PC-9 (cell line): ENCODE measurements at regions of chr7 and their contacts with region 1.

Region 1: GRCh38 chr7:124996778-124997177 is 67.2 kb upstream of the POT1 start:
- DNase-seq: no peak
- H3K4me3 ChIP-seq: no peak overlapping the region
- H3K27ac ChIP-seq: no peak overlapping the region
- H3K4me1 ChIP-seq: peaks cover 24% of the 10 kb centered on the region
- H3K27me3 ChIP-seq: no peaks in the 10 kb centered on the region
- CTCF ChIP-seq: no peak

Region 2: DNA sequence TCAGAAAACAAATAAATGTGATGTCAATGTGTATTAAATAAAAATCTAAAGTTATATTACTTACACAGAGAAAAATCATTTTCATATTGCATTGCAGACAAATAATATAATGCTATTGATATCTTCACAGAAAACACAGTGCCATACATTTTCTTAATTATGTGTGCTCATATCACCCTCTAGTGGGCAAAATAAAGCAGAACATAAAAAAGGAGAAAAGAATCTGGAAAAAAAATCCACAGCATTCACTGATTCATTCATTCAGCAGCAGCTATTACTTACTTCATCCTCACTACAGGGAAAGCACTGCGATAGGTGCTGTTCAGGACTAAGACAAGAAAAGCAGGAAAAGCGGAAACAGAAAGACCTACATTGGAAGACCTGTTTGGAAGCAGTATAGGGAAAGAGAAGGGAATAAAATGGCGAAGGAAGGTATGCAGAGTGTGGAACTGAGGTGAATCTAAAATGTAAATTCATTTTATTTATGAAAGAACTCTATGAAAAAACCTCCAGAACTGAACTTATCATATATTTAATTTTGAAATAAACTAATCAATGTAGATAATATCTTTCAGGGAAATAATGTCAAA is 140.4 kb before region 1 on chr7:
- CTCF ChIA-PET with region 1: no interaction called
- POLR2A ChIA-PET with region 1: no interaction called
- intact Hi-C with region 1: loop called (anchors 10 kb)
- DNase-seq: peak; percentile 3 to 36
- H3K4me3 ChIP-seq: no peak overlapping the region
- H3K27ac ChIP-seq: no peak overlapping the region
- H3K4me1 ChIP-seq: no peaks in the 10 kb centered on the region
- H3K27me3 ChIP-seq: no peaks in the 10 kb centered on the region
- CTCF ChIP-seq: peak; percentile 77

Region 3: GRCh38 chr7:124929467-124930172 is 67.2 kb before region 1 on chr7 and contains the start of gene POT1:
- CTCF ChIA-PET with region 1: no interaction called
- POLR2A ChIA-PET with region 1: no interaction called
- intact Hi-C with region 1: loop called (anchors 1 kb)
- DNase-seq: peak; percentile 96 to 98
- H3K4me3 ChIP-seq: peak within 1 kb of the TSS; percentile 73
- H3K27ac ChIP-seq: peak within 1 kb of the TSS; percentile 60
- H3K4me1 ChIP-seq: peaks cover 9% of the 10 kb centered on the region
- H3K27me3 ChIP-seq: no peaks in the 10 kb centered on the region
- CTCF ChIP-seq: no peak
- total RNA-seq, gene POT1: 42.7 and 46.9 TPM in 2 replicates

Region 4: DNA sequence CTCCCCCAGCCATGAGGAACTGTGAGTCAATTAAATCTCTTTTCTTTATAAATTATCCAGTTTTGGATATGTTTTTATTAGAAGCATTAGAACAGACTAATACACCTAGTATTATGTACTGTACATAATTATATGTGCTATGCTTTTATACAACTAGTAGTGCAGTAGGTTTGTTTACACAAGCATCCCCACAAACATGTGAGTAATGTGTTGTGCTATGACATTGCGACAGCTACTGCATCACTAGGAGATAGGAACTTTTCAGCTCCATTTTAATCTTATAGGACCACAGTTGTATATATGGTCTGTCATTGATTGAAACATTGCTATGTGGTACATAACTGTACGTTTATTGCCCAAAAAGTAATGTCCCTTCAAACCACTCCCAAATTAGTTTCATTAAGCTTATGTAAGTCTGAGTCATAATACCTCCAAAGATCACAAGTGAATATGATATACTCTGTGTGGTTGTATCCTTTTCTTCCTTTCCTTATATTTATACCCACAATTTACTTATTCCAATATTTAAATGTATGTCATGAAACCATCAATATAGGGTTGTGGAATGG is 116.0 kb after region 1 on chr7:
- CTCF ChIA-PET with region 1: no interaction called
- POLR2A ChIA-PET with region 1: no interaction called
- intact Hi-C with region 1: no loop called
- DNase-seq: peak in 1 of 2 experiments; percentile 48
- H3K4me3 ChIP-seq: no peak overlapping the region
- H3K27ac ChIP-seq: no peak overlapping the region
- H3K4me1 ChIP-seq: no peaks in the 10 kb centered on the region
- H3K27me3 ChIP-seq: no peaks in the 10 kb centered on the region
- CTCF ChIP-seq: no peak

Region 5: GRCh38 chr7:125136755-125137547 is 140.2 kb after region 1 on chr7:
- CTCF ChIA-PET with region 1: no interaction called
- POLR2A ChIA-PET with region 1: no interaction called
- intact Hi-C with region 1: loop called (anchors 2 kb)
- DNase-seq: peak; percentile 8 to 84
- H3K4me3 ChIP-seq: peak overlapping the region; percentile 36
- H3K27ac ChIP-seq: peak overlapping the region; percentile 88
- H3K4me1 ChIP-seq: peaks cover 22% of the 10 kb centered on the region
- H3K27me3 ChIP-seq: no peaks in the 10 kb centered on the region
- CTCF ChIP-seq: no peak

Region 6: DNA sequence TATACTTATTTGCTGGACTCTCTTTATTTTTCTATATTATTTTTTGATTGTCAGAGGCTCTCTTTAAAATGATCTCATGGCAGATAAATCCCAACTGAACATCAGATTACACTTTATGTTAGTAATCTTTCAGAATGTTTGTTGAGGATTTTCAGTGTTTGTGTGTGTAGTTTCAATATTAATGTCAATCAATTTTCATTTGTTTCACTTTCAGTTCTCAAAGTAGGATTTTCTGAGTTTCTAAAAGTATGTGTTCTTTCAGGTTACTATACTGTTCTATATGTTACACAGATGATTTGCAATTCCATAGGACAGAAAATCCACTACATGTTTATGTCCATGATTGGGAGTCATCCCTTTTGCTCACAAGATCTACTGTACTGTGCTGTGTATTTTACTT is 244.8 kb after region 1 on chr7:
- CTCF ChIA-PET with region 1: no interaction called
- POLR2A ChIA-PET with region 1: no interaction called
- intact Hi-C with region 1: no loop called
- DNase-seq: no peak
- H3K4me3 ChIP-seq: no peak overlapping the region
- H3K27ac ChIP-seq: no peak overlapping the region
- H3K4me1 ChIP-seq: no peaks in the 10 kb centered on the region
- H3K27me3 ChIP-seq: no peaks in the 10 kb centered on the region
- CTCF ChIP-seq: no peak

Region 7: GRCh38 chr7:126700807-126701604 is 1704.2 kb after region 1 on chr7:
- CTCF ChIA-PET with region 1: no interaction called
- POLR2A ChIA-PET with region 1: no interaction called
- intact Hi-C with region 1: loop called (anchors 5 kb)
- DNase-seq: peak; percentile 83 to 90
- H3K4me3 ChIP-seq: peak overlapping the region; percentile 35; the same call in 1 of the 2 replicates
- H3K27ac ChIP-seq: peak overlapping the region; percentile 93
- H3K4me1 ChIP-seq: peaks cover 35% of the 10 kb centered on the region
- H3K27me3 ChIP-seq: no peaks in the 10 kb centered on the region
- CTCF ChIP-seq: no peak